ENCODE measurements at regions of chr20 and their contacts with region 1.

Region 1: GRCh38 chr20:4014031-4014474 is 1.3 kb downstream of the RNF24 start:
- DNase-seq: peak; percentile 91
- H3K4me3 ChIP-seq: peak overlapping the region; percentile 7 to 91 (median 86)
- H3K27ac ChIP-seq: peak overlapping the region; percentile 61
- H3K4me1 ChIP-seq: peaks cover 24% of the 10 kb centered on the region
- H3K27me3 ChIP-seq: no peaks in the 10 kb centered on the region
- CTCF ChIP-seq: peak; percentile 68 to 91

Region 2: DNA sequence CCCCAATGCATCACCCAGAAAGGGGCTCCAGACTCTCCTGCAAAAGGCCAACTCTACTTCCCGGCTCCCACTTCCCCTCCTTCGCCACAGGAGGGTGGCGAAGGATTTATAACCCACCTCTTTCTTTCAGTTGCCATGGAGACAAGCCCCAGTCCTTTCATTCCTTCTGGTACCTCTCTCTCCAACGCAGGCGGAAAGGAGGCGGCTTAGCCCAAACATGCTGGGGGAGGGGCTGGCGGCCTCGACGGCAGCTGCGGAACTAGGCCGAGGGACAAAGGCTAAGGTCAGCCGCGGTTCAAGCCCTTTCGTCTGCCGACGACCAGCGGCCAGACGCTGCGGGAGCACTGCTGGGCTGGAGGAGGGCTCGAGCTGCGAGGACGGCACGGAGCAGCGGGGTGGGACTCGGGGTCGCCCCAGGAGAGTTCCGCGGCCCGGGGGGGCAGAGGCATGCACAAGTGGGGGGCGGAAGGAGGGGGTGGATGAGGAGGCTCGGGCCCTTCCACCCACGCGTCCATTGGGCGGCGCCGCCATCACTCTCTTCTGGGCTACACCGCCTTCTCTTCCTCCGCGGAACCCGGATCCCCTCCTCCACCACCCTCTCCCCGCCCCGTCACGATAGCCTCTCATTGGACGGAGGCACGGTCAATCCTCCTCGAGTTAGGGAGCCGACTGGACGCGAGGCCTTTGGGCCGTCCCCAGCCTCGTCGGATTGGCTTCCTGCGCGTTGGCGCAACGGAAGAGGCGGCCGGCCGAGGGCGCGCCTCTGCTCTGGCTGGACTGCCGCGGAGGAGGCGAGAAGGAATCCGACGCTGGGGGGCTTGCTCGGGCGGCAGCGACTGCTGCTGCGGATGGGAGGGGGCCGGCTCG is 125.2 kb before region 1 on chr20 and contains the start of gene PANK2:
- CTCF ChIA-PET with region 1: no interaction called
- dilution Hi-C with region 1: no loop called
- in situ Hi-C with region 1: no loop called
- intact Hi-C with region 1: loop called (anchors 2 kb)
- DNase-seq: peak; percentile 99
- H3K4me3 ChIP-seq: peak within 1 kb of the TSS; percentile 87 to 97 (median 94)
- H3K27ac ChIP-seq: peak within 1 kb of the TSS; percentile 82
- H3K4me1 ChIP-seq: peaks cover 32% of the 10 kb centered on the region
- H3K27me3 ChIP-seq: no peaks in the 10 kb centered on the region
- CTCF ChIP-seq: peak; percentile 42
- total RNA-seq, gene PANK2: 41.0 to 45.0 TPM

Region 3: DNA sequence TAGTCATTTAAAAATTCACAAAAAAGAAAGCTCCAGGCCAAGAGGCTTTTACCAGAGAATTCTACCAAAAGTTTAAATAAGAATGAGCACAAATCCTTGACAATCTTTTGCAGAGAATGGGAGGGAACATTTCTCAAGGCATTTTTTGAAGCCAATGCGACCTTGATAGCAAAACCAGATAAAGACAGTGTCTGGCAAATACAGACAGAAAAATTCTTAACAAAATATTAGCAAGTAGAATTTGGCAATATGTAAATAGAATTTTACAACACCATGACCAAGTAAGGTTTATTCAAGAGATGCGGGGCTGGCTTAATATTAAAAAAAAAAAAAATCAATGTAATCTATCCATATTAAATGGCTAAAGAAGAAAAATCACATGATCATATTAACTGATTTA is 40.3 kb before region 1 on chr20:
- CTCF ChIA-PET with region 1: no interaction called
- dilution Hi-C with region 1: no loop called
- in situ Hi-C with region 1: no loop called
- intact Hi-C with region 1: no loop called
- DNase-seq: no peak
- H3K4me3 ChIP-seq: no peak overlapping the region
- H3K27ac ChIP-seq: no peak overlapping the region
- H3K4me1 ChIP-seq: no peaks in the 10 kb centered on the region
- H3K27me3 ChIP-seq: no peaks in the 10 kb centered on the region
- CTCF ChIP-seq: no peak

Region 4: DNA sequence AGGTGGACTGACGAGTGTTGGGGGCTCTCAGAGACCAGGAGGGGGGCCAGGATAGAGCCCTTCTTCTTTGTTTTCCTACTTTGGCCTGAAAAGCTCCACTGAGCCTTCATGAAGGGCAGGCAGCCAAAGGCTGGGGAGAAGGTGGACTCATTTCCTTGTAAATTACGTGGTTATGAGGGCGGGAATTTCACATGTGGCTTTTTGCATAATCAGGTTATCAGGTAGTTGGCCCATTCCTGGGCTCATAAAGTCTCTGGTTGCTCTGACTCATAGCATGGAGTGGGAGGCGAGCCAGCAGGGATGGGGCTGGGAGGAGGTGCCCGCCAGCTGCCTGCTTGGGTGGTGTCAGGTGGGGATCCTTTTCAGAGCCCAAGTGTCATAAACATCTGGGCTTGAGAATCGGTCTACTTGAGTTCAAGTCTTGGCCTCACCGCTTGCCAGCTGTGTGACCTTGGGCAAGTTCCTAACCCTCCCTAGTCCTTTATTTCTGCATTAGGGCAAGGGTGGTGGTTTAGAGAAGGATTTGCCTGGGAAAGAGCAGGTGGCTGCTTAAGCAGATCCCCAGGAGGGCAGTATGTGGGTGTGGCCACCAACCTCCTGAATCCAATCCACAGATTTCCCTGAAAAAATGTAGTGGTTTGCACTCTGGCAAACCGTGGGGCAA is 27.8 kb after region 1 on chr20:
- CTCF ChIA-PET with region 1: interaction called, 3 read pairs
- dilution Hi-C with region 1: no loop called
- in situ Hi-C with region 1: no loop called
- intact Hi-C with region 1: loop called (anchors 1 kb)
- DNase-seq: peak; percentile 98
- H3K4me3 ChIP-seq: no peak overlapping the region
- H3K27ac ChIP-seq: no peak overlapping the region
- H3K4me1 ChIP-seq: peaks cover 47% of the 10 kb centered on the region
- H3K27me3 ChIP-seq: no peaks in the 10 kb centered on the region
- CTCF ChIP-seq: no peak

Region 5: GRCh38 chr20:4082406-4083097 is 68.5 kb after region 1 on chr20:
- CTCF ChIA-PET with region 1: interaction called, 7 read pairs
- dilution Hi-C with region 1: loop called (anchors 5 kb)
- in situ Hi-C with region 1: loop called in 1 of 2 experiments (anchors 10 kb)
- intact Hi-C with region 1: loop called (anchors 1 kb)
- DNase-seq: peak; percentile 79
- H3K4me3 ChIP-seq: no peak overlapping the region
- H3K27ac ChIP-seq: peak overlapping the region; percentile 70
- H3K4me1 ChIP-seq: peaks cover 18% of the 10 kb centered on the region
- H3K27me3 ChIP-seq: no peaks in the 10 kb centered on the region
- CTCF ChIP-seq: no peak

Region 6: GRCh38 chr20:4585104-4585753 is 571.2 kb after region 1 on chr20:
- CTCF ChIA-PET with region 1: no interaction called
- dilution Hi-C with region 1: loop called (anchors 5 kb)
- in situ Hi-C with region 1: no loop called
- intact Hi-C with region 1: no loop called
- DNase-seq: peak; percentile 68
- H3K4me3 ChIP-seq: no peak overlapping the region
- H3K27ac ChIP-seq: peak overlapping the region; percentile 80
- H3K4me1 ChIP-seq: peaks cover 14% of the 10 kb centered on the region
- H3K27me3 ChIP-seq: no peaks in the 10 kb centered on the region
- CTCF ChIP-seq: no peak

Measured in mammary epithelial cell (primary cell).